PC-3 (cell line): ENCODE measurements at regions of chr19 and their contacts with region 1.

Region 1: GRCh38 chr19:40305403-40305802 is 20.3 kb upstream of the AKT2 start:
- DNase-seq: peak; percentile 71
- ATAC-seq: peak; percentile 71
- H3K4me3 ChIP-seq: no peak overlapping the region
- H3K27ac ChIP-seq: no peak overlapping the region
- H3K4me1 ChIP-seq: no peaks in the 10 kb centered on the region
- H3K27me3 ChIP-seq: no peaks in the 10 kb centered on the region
- CTCF ChIP-seq: peak; percentile 74

Region 2: GRCh38 chr19:40403262-40403984 is 98.0 kb after region 1 on chr19:
- CTCF ChIA-PET with region 1: interaction called, 14 read pairs
- POLR2A ChIA-PET with region 1: no interaction called
- intact Hi-C with region 1: no loop called
- DNase-seq: peak; percentile 76
- ATAC-seq: peak; percentile 92
- H3K4me3 ChIP-seq: peak overlapping the region; percentile 73
- H3K27ac ChIP-seq: no peak overlapping the region
- H3K4me1 ChIP-seq: peaks cover 4% of the 10 kb centered on the region; the same call in 1 of the 2 replicates
- H3K27me3 ChIP-seq: no peaks in the 10 kb centered on the region
- CTCF ChIP-seq: no peak

Region 3: DNA sequence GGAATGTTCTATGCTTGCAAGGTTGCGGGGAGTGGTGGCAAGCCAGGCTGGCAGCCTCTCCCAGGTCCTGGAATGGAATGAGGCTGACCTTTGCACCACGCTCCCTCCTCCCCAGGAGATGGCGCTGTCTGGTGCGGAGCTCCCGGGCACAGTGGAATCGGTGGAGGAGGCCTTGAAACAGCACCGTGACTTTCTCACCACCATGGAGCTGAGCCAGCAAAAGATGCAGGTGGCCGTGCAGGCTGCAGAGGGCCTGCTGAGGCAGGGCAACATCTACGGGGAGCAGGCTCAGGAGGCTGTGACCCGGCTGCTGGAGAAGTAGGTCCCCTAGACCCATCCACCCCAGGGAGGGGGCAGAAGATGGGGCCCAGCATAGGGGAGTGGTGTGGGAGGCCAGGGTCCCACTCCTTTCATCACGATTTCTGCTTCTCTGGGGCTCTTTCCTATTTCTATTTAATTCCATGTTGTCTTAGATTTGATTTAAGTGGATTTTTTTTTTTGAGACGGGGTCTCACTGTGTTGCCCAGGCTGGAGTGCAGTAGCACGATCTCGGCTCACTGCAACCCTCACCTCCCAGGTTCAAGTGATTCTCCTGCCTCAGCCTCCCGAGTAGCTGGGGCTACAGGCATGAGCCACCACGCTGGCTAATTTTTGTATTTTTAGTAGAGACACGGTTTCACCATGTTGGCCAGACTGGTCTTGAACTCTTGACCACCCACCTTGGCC is 218.1 kb after region 1 on chr19:
- CTCF ChIA-PET with region 1: interaction called, 4 read pairs
- POLR2A ChIA-PET with region 1: no interaction called
- intact Hi-C with region 1: loop called (anchors 5 kb)
- DNase-seq: peak; percentile 66
- ATAC-seq: peak; percentile 78
- H3K4me3 ChIP-seq: no peak overlapping the region
- H3K27ac ChIP-seq: no peak overlapping the region
- H3K4me1 ChIP-seq: no peaks in the 10 kb centered on the region
- H3K27me3 ChIP-seq: no peaks in the 10 kb centered on the region
- CTCF ChIP-seq: peak; percentile 71